ENCODE measurements at regions of chr1 and their contacts with region 1.

Region 1: DNA sequence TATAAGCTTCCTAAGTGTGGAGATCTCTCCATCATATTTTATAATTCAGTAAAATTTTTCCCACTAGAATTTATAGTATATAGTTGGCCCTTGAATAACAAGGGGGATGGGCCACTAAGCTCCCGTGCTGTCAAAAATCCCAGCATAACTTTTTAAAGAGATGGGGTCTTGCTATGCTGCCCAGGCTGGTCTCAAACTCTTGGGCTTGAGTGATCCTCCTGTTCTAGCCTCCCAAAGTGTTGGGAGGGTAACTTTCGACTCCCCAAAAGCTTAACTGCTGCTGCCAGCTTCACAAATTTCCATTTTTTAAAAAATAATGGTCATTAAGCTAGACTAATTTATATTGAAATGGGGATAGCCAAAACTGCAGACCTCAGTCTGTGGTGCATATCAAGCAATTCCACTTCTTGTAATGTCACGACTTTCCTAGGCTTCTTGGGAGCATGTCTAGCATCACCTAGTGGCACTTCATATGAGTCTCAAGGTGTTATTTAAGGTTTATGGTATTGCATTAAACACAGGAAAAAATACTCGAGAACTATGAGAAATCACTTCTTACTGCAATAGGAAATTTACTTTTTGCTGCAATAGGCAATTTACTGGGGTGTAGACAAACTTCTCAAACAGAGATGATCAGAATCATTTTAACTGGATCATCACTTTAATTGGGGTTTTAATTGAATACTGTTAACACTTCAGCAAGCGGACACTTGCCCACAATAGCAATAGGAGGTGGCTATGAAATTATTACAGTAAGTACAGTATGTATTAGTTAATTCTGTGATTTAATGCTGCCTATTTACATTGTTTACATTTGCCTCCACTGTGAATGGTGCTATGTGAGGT is 19.3 kb upstream of the ACTA1 start:
- DNase-seq: no peak
- ATAC-seq: no peak
- H3K4me3 ChIP-seq: no peak overlapping the region
- H3K27ac ChIP-seq: no peak overlapping the region
- H3K4me1 ChIP-seq: no peaks in the 10 kb centered on the region
- H3K27me3 ChIP-seq: no peaks in the 10 kb centered on the region

Region 2: GRCh38 chr1:229258031-229258756 is 195.0 kb before region 1 on chr1:
- intact Hi-C with region 1: loop called (anchors 2 to 5 kb)
- DNase-seq: peak in 1 of 2 donors; percentile 61
- ATAC-seq: peak; percentile 88
- H3K4me3 ChIP-seq: no peak overlapping the region
- H3K27ac ChIP-seq: no peak overlapping the region
- H3K4me1 ChIP-seq: no peaks in the 10 kb centered on the region
- H3K27me3 ChIP-seq: no peaks in the 10 kb centered on the region

Region 3: GRCh38 chr1:229420765-229421164 is 32.4 kb before region 1 on chr1:
- intact Hi-C with region 1: loop called in 1 of 2 experiments (anchors 2 kb)
- DNase-seq: no peak
- ATAC-seq: no peak
- H3K4me3 ChIP-seq: no peak overlapping the region
- H3K27ac ChIP-seq: no peak overlapping the region
- H3K4me1 ChIP-seq: no peaks in the 10 kb centered on the region
- H3K27me3 ChIP-seq: no peaks in the 10 kb centered on the region

Measured in aorta (tissue), 5 donors.